H1 (cell line): ENCODE measurements at regions of chr13 and their contacts with region 1.

Region 1: DNA sequence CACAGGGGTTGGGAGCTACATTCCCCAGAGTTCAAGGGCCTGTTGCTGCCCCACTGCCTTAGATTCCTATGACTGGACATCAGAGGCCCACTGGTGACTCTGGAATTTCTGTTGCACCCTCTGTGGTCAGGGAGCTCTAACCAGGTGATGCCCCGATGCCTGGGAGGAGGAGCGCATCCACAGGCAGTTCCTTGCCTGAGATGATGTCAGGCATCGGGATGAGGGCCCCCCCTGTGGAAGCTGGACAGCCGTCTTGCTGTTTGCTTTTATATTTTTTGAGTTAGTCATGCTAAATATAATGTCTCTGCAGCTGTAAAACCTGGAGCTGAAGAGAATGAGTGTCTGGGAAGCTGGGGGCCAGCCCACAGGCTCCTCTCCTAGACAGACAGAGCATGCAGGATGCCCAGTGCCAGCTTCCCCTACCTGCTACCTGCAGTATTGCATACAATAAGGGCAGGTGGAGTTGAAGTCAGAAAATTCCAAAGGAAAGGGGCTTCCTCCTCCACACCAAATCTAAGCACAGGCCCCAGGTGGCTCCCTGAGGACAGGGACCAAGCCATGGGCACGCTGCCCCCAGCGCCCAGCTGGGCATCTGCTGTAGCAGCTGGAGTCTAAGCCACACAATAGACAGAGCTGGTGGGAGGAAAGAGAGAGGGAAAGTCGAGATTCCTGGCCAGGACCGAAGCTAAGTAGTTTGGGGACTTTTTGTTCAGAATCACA is 16.2 kb downstream of the COL4A2 start:
- DNase-seq: no peak
- H3K4me3 ChIP-seq: no peak overlapping the region
- H3K27ac ChIP-seq: no peak overlapping the region
- H3K4me1 ChIP-seq: peaks cover 8 to 29% (median 15%) of the 10 kb centered on the region in 4 experiments
- H3K27me3 ChIP-seq: no peaks in the 10 kb centered on the region
- CTCF ChIP-seq: peak; percentile 31 to 48 (median 39); a peak in 3 of 4 replicates
- EP300 ChIP-seq: no peak
- POLR2A ChIP-seq: no peak
- RAD21 ChIP-seq: peak; percentile 20 to 49; a peak in 3 of 4 replicates

Region 2: DNA sequence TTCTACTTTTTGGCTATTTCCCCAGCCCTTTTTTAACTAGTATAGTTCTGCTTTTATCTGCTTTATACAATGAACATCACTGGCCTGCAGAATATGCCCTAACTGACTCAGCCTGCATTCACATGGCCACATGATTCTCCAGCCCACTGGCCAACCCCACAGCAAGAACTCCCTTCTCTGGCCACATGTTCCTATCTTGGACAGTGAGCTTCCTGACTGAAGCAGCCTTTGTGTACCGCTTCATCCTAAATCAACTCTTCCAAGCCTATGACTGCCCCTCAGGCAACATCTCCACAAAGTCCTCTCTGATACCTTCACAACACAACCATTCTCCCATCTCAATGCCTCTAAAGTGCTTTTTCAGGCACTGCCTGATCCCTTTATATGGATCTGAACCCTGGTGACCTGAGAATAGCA is 230.5 kb before region 1 on chr13:
- CTCF ChIA-PET with region 1: no interaction called
- POLR2A ChIA-PET with region 1: no interaction called
- DNase-seq: no peak
- H3K4me3 ChIP-seq: no peak overlapping the region
- H3K27ac ChIP-seq: no peak overlapping the region
- H3K4me1 ChIP-seq: no peaks in the 10 kb centered on the region; a peak in 1 of 7 replicates
- H3K27me3 ChIP-seq: no peaks in the 10 kb centered on the region
- CTCF ChIP-seq: no peak
- EP300 ChIP-seq: no peak
- POLR2A ChIP-seq: no peak
- RAD21 ChIP-seq: no peak

Region 3: GRCh38 chr13:110244071-110244830 is 79.1 kb before region 1 on chr13:
- CTCF ChIA-PET with region 1: interaction called, 11 read pairs
- POLR2A ChIA-PET with region 1: no interaction called
- DNase-seq: peak in 1 of 2 experiments; percentile 35
- H3K4me3 ChIP-seq: no peak overlapping the region
- H3K27ac ChIP-seq: no peak overlapping the region
- H3K4me1 ChIP-seq: peaks cover 0 to 14% (median 2%) of the 10 kb centered on the region in 4 experiments; a peak in 5 of 7 replicates
- H3K27me3 ChIP-seq: no peaks in the 10 kb centered on the region
- CTCF ChIP-seq: no peak
- EP300 ChIP-seq: no peak
- POLR2A ChIP-seq: no peak
- RAD21 ChIP-seq: no peak

Region 4: DNA sequence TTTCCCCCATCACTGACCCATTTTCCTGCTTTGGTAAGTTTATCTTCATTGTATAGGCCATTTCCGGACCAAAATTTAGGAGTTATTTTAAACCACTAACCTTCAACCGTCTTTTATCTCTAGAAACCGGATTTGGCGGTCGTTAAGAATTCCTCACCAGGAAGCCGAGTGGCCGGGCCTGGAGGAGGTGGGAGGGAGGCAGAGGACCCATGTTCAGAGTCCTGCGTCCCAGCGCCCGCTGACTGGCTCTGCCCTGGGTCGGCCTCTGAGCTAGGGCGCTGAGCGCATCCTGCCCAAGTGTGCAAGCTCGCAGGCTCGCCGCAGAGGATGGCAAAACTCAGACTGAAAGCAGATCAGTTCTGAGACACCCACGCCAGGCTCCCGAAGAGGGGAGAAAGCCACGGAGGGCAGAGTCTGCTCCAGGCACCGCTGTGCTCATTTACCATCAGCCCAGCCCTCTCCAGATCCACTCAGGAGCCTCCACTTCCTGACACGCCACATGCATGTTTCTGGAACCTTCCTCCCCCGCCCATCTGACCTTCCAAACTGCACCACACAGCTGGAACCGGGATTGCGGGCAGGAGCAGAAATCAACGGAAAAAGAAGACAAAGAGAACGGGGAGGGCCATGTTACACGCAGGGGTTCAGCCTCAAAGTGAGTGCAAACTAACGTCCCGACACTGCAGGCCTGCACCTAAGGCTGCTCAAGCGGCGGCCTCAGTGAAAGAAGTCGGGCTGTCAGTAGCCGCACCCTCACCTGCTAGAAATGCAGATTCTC is 24.6 kb before region 1 on chr13:
- CTCF ChIA-PET with region 1: interaction called, 13 read pairs
- POLR2A ChIA-PET with region 1: no interaction called
- DNase-seq: peak in 1 of 2 experiments; percentile 57
- H3K4me3 ChIP-seq: peak overlapping the region in 3 of 4 experiments; percentile 7 to 24 (median 8); a peak in 3 of 8 replicates
- H3K27ac ChIP-seq: no peak overlapping the region
- H3K4me1 ChIP-seq: peaks cover 6 to 13% (median 9%) of the 10 kb centered on the region in 4 experiments; a peak in 6 of 7 replicates
- H3K27me3 ChIP-seq: no peaks in the 10 kb centered on the region
- CTCF ChIP-seq: no peak
- EP300 ChIP-seq: no peak
- POLR2A ChIP-seq: no peak
- RAD21 ChIP-seq: no peak

Region 5: DNA sequence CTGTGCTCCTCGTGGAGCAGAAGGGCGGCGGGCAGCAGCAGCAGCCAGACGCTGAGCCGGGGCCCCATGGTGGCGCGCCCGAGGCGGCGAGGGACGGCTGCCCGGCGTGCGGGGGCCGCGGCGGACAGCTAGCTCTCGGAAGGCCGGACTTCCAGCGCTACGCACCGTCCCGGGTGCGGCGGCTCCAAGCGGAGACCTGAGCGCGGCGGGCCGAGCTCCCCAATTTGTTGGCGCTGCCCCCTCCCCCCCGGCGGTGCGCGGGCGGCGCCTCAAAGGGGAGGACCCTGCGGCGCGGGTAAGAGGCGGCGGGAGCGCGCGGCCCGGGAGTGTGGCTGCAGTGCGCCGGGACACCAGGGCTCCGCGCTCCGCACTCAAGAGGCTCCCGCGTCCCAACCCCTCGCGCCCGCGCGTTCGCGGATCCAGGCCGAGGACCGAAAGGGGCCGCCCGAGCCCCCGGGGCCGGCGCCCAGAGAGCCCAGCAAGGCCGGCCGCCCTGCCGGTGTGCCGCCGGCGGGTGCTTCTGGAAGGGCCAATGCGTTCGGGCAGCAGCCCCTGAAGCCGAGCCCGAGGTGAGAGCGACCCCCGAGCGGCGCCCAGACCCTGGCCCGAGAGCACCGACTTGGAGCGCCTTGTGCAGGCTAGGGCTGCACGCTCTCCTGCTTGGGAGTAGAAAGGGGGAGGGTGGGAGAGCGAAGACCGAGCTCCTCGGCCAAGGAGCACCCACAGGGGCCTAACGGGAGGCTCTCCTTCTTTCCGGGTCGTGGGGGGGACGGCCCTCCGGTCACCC is 16.2 kb before region 1 on chr13 and contains the starts of genes COL4A1 and COL4A2:
- CTCF ChIA-PET with region 1: interaction called, 40 read pairs
- POLR2A ChIA-PET with region 1: interaction called, 34 read pairs
- DNase-seq: no peak
- H3K4me3 ChIP-seq: peak within 1 kb of the TSS; percentile 44 to 93 (median 76)
- H3K27ac ChIP-seq: peak within 1 kb of the TSS; percentile 44; the same call in 1 of the 2 replicates
- H3K4me1 ChIP-seq: peaks cover 5 to 9% (median 7%) of the 10 kb centered on the region in 4 experiments; a peak in 5 of 7 replicates
- H3K27me3 ChIP-seq: peaks cover 0 to 18% (median 10%) of the 10 kb centered on the region in 4 experiments; a peak in 5 of 7 replicates
- CTCF ChIP-seq: no peak
- EP300 ChIP-seq: no peak
- POLR2A ChIP-seq: peak; percentile 56 to 88
- RAD21 ChIP-seq: 0 out of 4 replicates have a peak, but pooled peaks of 1 of the 2 experiments have one; percentile 4
- total RNA-seq, gene COL4A1: 82.0 and 91.0 TPM in 2 replicates
- total RNA-seq, gene COL4A2: 77.0 and 80.4 TPM in 2 replicates

Region 6: DNA sequence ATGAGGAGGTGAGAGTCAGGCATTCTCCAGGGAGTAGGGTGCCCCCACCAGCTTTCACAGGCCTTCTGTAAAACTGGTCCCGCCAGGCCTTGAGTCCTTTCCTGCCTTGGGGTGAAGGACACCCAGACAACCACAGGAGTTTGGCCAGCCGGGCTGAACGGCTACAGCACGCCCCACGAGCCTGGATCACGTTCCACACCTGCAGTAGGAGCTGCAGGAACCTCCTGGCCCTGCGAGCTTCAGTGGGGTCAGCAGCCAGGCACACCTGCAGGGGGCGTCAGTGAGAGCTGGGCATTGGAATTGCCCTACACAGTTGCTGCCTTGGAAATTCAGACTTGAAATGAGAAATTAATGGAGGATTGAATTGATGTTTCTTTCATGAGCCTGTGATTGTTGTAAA is 29.4 kb after region 1 on chr13:
- CTCF ChIA-PET with region 1: interaction called, 11 read pairs
- POLR2A ChIA-PET with region 1: no interaction called
- DNase-seq: peak in 1 of 2 experiments; percentile 85
- H3K4me3 ChIP-seq: no peak overlapping the region
- H3K27ac ChIP-seq: no peak overlapping the region
- H3K4me1 ChIP-seq: peaks cover 3 to 17% (median 10%) of the 10 kb centered on the region in 4 experiments; a peak in 6 of 7 replicates
- H3K27me3 ChIP-seq: no peaks in the 10 kb centered on the region
- CTCF ChIP-seq: peak; percentile 76 to 94 (median 83)
- EP300 ChIP-seq: no peak
- POLR2A ChIP-seq: no peak
- RAD21 ChIP-seq: peak; percentile 28 to 59; a peak in 3 of 4 replicates

Region 7: DNA sequence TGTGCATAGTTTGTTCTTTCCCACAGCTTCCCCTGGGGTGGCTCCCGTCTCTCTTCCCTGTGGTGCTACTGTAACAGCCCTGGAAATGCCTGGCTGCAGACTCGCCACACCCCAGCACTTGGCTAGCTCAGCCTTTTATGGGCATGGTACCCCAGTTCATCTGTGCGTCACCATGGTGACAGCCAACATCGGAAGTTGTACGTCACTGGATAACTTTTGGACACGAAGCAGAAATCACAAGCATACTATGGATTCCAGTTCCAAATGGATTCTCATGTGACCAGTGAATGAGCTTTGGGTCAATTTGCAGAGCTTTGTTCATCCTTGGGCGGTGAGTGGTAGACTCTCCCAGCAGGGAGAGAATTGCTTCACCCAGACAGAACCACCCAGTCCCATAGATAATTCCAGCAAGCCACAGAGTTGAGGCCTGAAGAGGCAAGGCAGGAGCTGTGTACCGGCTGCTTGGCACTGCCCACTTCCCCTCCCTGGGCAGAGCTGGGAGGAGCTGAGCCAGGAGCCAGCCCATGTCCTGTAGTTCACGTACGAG is 38.1 kb after region 1 on chr13:
- CTCF ChIA-PET with region 1: interaction called, 10 read pairs
- POLR2A ChIA-PET with region 1: no interaction called
- DNase-seq: no peak
- H3K4me3 ChIP-seq: no peak overlapping the region
- H3K27ac ChIP-seq: no peak overlapping the region
- H3K4me1 ChIP-seq: no peaks in the 10 kb centered on the region; a peak in 1 of 7 replicates
- H3K27me3 ChIP-seq: no peaks in the 10 kb centered on the region
- CTCF ChIP-seq: no peak
- EP300 ChIP-seq: no peak
- POLR2A ChIP-seq: no peak
- RAD21 ChIP-seq: no peak